GM12878 (cell line): ENCODE measurements at regions of chr1 and their contacts with region 1.

Region 1: DNA sequence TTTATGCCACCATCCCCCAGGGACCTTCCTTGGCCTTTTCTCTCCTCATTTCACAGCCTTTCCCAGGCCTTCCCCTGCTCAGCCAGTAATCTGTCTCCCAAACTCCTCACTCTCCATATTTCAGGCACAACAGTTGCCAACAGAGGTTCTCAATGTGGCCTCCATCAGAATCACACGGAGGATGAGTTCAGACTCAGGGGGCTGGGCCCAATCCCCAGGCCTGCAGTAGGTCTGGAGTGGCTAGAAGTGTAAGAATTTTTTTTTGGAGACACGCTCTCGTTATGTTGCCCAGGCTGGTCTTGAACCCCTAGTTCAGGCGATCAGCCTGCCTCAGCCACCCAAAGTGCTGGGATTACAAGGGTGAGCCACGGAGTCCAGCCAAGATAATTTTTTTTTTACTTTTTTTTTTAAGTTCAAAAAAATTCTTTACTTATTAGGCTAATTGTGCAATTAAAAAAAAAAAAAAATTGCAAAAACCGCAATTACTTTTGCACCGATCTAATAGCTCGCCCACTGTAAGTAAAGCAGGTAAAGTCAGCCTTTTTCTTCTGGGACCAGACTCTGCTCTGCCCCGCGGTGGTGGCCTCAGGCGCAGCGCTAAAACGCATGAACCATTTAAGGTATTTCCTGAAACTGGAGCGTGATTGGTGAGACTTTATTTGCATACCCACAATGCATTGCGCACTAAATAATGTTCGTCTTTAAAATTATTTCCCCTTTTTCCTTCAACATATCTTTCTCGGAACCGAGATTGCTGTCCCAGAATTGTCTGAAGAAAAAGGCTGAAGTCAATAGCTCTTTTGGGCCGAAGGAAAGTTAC is 18.7 kb downstream of the KIAA2013 start:
- DNase-seq: peak; percentile 85
- ATAC-seq: peak; percentile 70
- H3K4me3 ChIP-seq: no peak overlapping the region
- H3K27ac ChIP-seq: peak overlapping the region; percentile 100
- H3K4me1 ChIP-seq: no peaks in the 10 kb centered on the region
- H3K27me3 ChIP-seq: no peaks in the 10 kb centered on the region
- CTCF ChIP-seq: peak; percentile 59 to 71 (median 66); a peak in 5 of 6 replicates
- EP300 ChIP-seq: no peak
- POLR2A ChIP-seq: no peak
- RAD21 ChIP-seq: peak; percentile 48; the same call in 1 of the 2 replicates

Region 2: DNA sequence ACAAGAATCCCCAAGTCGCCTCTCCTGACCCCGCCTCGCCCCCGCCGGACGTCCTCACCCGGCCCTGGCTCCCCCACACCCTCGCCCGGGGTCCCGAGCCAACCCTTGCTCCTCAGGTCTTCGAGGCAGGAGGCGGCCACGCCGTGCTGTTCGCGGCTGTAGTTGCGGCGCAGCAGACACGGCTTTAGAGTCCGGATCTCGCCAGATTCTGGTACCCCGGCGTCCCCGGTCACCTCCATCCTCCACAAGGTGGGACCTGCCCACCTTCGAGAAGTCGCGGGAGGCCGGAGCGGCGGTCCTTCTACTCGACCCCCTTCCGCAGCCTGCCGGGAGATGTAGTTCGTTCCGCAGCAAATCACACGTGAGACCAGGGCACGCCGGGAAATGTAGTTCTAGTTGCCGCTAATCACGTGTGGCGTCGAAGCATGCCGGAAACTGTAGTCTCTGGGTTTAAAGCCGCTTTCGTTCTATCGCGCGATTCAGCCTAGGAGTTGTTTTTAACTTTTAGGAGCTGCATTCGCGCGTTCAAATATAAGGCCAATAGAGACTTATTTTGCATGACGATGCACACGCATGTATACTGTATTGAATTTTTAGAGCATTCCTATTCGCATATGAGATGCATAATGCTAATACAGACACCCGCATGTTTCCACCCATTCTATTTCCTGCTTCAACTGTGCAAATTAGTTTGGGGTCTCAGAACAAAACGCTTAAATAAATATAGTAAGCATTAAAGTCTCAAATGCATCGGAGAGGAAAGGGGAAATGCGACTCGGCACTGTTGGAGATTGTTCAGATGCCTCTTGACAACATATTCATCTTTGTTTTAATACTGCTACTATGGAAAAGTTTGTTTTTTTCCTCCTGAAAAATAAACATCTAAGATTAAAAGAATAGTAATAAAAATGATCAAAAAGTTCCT is 1435.0 kb before region 1 on chr1 and contains the start of gene DFFA:
- CTCF ChIA-PET with region 1: no interaction called
- POLR2A ChIA-PET with region 1: no interaction called
- RAD21 ChIA-PET with region 1: no interaction called
- SMC1A ChIA-PET with region 1: no interaction called
- in situ Hi-C with region 1: no loop called
- intact Hi-C with region 1: loop called (anchors 10 kb)
- DNase-seq: peak; percentile 95
- ATAC-seq: peak; percentile 86
- H3K4me3 ChIP-seq: peak within 1 kb of the TSS; percentile 79
- H3K27ac ChIP-seq: peak within 1 kb of the TSS; percentile 70
- H3K4me1 ChIP-seq: peaks cover 18% of the 10 kb centered on the region
- H3K27me3 ChIP-seq: no peaks in the 10 kb centered on the region
- CTCF ChIP-seq: no peak
- EP300 ChIP-seq: no peak
- POLR2A ChIP-seq: peak; percentile 91
- RAD21 ChIP-seq: no peak
- polyA plus RNA-seq, gene DFFA: 55.6 to 57.3 TPM

Region 3: GRCh38 chr1:11397151-11397901 is 510.2 kb before region 1 on chr1:
- CTCF ChIA-PET with region 1: no interaction called
- POLR2A ChIA-PET with region 1: no interaction called
- RAD21 ChIA-PET with region 1: no interaction called
- SMC1A ChIA-PET with region 1: no interaction called
- in situ Hi-C with region 1: no loop called
- intact Hi-C with region 1: no loop called
- DNase-seq: no peak
- ATAC-seq: no peak
- H3K4me3 ChIP-seq: no peak overlapping the region
- H3K27ac ChIP-seq: no peak overlapping the region
- H3K4me1 ChIP-seq: no peaks in the 10 kb centered on the region
- H3K27me3 ChIP-seq: peaks cover 0 to 5% of the 10 kb centered on the region in 2 experiments; a peak in 2 of 4 replicates
- CTCF ChIP-seq: no peak
- EP300 ChIP-seq: no peak
- POLR2A ChIP-seq: no peak
- RAD21 ChIP-seq: no peak

Region 4: GRCh38 chr1:11925938-11926292 is 18.4 kb after region 1 on chr1:
- CTCF ChIA-PET with region 1: interaction called, 7 read pairs
- POLR2A ChIA-PET with region 1: interaction called, 37 read pairs
- RAD21 ChIA-PET with region 1: interaction called, 3 read pairs
- SMC1A ChIA-PET with region 1: interaction called, 8 read pairs
- in situ Hi-C with region 1: no loop called
- intact Hi-C with region 1: loop called (anchors 1 kb)
- DNase-seq: no peak
- ATAC-seq: peak; percentile 5; the same call in 2 of the 3 replicates
- H3K4me3 ChIP-seq: peak overlapping the region; percentile 85; the same call in 1 of the 2 replicates
- H3K27ac ChIP-seq: no peak overlapping the region
- H3K4me1 ChIP-seq: peaks cover 20% of the 10 kb centered on the region
- H3K27me3 ChIP-seq: no peaks in the 10 kb centered on the region
- CTCF ChIP-seq: no peak
- EP300 ChIP-seq: no peak
- POLR2A ChIP-seq: no peak
- RAD21 ChIP-seq: no peak

Region 5: GRCh38 chr1:11979851-11980675 is 72.6 kb after region 1 on chr1 and contains the start of gene MFN2:
- CTCF ChIA-PET with region 1: interaction called, 23 read pairs
- POLR2A ChIA-PET with region 1: interaction called, 36 read pairs
- RAD21 ChIA-PET with region 1: interaction called, 34 read pairs
- SMC1A ChIA-PET with region 1: interaction called, 11 read pairs
- in situ Hi-C with region 1: no loop called
- intact Hi-C with region 1: loop called (anchors 1 kb)
- DNase-seq: peak; percentile 83
- ATAC-seq: peak; percentile 96
- H3K4me3 ChIP-seq: peak within 1 kb of the TSS; percentile 99
- H3K27ac ChIP-seq: peak within 1 kb of the TSS; percentile 83
- H3K4me1 ChIP-seq: peaks cover 6% of the 10 kb centered on the region
- H3K27me3 ChIP-seq: no peaks in the 10 kb centered on the region
- CTCF ChIP-seq: no peak
- EP300 ChIP-seq: no peak
- POLR2A ChIP-seq: peak; percentile 92
- RAD21 ChIP-seq: no peak
- polyA plus RNA-seq, gene MFN2: 5.3 to 6.4 TPM

Region 6: DNA sequence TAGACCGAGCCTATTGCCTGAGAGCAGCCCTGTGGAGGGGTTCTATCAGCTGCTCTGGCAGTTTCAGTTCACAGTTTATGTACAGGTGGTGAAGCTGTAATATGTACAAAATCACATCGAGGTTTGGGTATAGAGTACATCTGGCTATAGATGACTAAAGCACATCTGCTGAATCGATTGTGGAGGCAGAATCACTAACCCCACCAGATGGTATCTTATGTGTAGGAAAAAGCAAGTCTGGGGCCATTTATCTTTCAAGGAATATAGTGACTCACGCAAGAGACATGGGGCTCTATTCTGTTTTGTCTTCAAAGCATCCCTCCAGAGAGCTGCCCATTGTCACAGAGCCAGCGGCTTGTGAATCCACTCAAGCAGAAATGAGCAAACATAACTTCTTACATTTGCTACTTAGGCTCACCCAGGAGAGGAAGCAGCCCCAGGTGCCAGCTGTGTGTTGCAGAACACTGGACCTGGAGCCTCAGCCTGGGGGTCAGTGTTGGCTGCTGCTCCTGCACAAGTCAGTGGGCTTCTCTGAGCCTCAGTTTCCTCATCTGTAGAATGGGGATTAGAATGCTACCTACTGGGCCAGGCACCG is 133.1 kb after region 1 on chr1:
- CTCF ChIA-PET with region 1: no interaction called
- POLR2A ChIA-PET with region 1: interaction called, 14 read pairs
- RAD21 ChIA-PET with region 1: interaction called, 5 read pairs
- SMC1A ChIA-PET with region 1: interaction called, 4 read pairs
- in situ Hi-C with region 1: no loop called
- intact Hi-C with region 1: loop called (anchors 2 kb)
- DNase-seq: peak; percentile 79
- ATAC-seq: peak; percentile 80
- H3K4me3 ChIP-seq: peak overlapping the region; percentile 21; the same call in 1 of the 2 replicates
- H3K27ac ChIP-seq: peak overlapping the region; percentile 68
- H3K4me1 ChIP-seq: peaks cover 53% of the 10 kb centered on the region
- H3K27me3 ChIP-seq: no peaks in the 10 kb centered on the region
- CTCF ChIP-seq: no peak
- EP300 ChIP-seq: peak; percentile 51 to 60; a peak in 3 of 4 replicates
- POLR2A ChIP-seq: peak; percentile 46; the same call in 1 of the 2 replicates
- RAD21 ChIP-seq: peak; percentile 9; the same call in 1 of the 2 replicates

Region 7: GRCh38 chr1:12078938-12079861 is 171.7 kb after region 1 on chr1:
- CTCF ChIA-PET with region 1: interaction called, 3 read pairs
- POLR2A ChIA-PET with region 1: interaction called, 21 read pairs
- RAD21 ChIA-PET with region 1: interaction called, 7 read pairs
- SMC1A ChIA-PET with region 1: no interaction called
- in situ Hi-C with region 1: no loop called
- intact Hi-C with region 1: no loop called
- DNase-seq: peak; percentile 82
- ATAC-seq: peak; percentile 83
- H3K4me3 ChIP-seq: peak overlapping the region; percentile 52
- H3K27ac ChIP-seq: peak overlapping the region; percentile 97
- H3K4me1 ChIP-seq: peaks cover 67% of the 10 kb centered on the region
- H3K27me3 ChIP-seq: no peaks in the 10 kb centered on the region
- CTCF ChIP-seq: peak; percentile 68 to 74 (median 71)
- EP300 ChIP-seq: peak in 1 of 2 experiments; percentile 11; a peak in 3 of 4 replicates
- POLR2A ChIP-seq: peak; percentile 71
- RAD21 ChIP-seq: peak; percentile 72